ENCODE measurements at regions of chr6 and their contacts with region 1.

Region 1: GRCh38 chr6:33200219-33201146 is at the starts of genes RXRB and SLC39A7:
- DNase-seq: peak; percentile 97 to 100 (median 99)
- ATAC-seq: peak; percentile 75
- H3K4me3 ChIP-seq: peak within 1 kb of the TSS; percentile 77 to 85
- H3K4me3 Mint-ChIP-seq: peak within 1 kb of the TSS; percentile 98
- H3K27ac ChIP-seq: peak within 1 kb of the TSS; percentile 89 to 94
- H3K27ac Mint-ChIP-seq: peak within 1 kb of the TSS; percentile 99
- H3K4me1 ChIP-seq: peaks cover 57% of the 10 kb centered on the region
- H3K4me1 Mint-ChIP-seq: peaks cover 78% of the 10 kb centered on the region
- H3K27me3 ChIP-seq: no peaks in the 10 kb centered on the region
- H3K27me3 Mint-ChIP-seq: no peaks in the 10 kb centered on the region
- CTCF ChIP-seq: no peak
- total RNA-seq, gene RXRB: 39.2 to 40.0 TPM
- total RNA-seq, gene SLC39A7: 9.7 to 11.0 TPM

Region 2: GRCh38 chr6:32843979-32844838 is 356.3 kb before region 1 on chr6 and contains the start of gene PSMB8:
- CTCF ChIA-PET with region 1: no interaction called
- POLR2A ChIA-PET with region 1: no interaction called
- intact Hi-C with region 1: loop called in 1 of 2 experiments (anchors 1 kb)
- DNase-seq: peak; percentile 96 to 99 (median 99)
- ATAC-seq: peak; percentile 75
- H3K4me3 ChIP-seq: peak within 1 kb of the TSS; percentile 99
- H3K4me3 Mint-ChIP-seq: peak within 1 kb of the TSS; percentile 99
- H3K27ac ChIP-seq: peak within 1 kb of the TSS; percentile 96 to 100
- H3K27ac Mint-ChIP-seq: peak within 1 kb of the TSS; percentile 99
- H3K4me1 ChIP-seq: peaks cover 79% of the 10 kb centered on the region
- H3K4me1 Mint-ChIP-seq: peaks cover 83% of the 10 kb centered on the region
- H3K27me3 ChIP-seq: no peaks in the 10 kb centered on the region
- H3K27me3 Mint-ChIP-seq: no peaks in the 10 kb centered on the region
- CTCF ChIP-seq: no peak
- total RNA-seq, gene PSMB8: 108 to 117 TPM

Region 3: GRCh38 chr6:33161354-33162331 is 38.8 kb before region 1 on chr6:
- CTCF ChIA-PET with region 1: interaction called, 76 read pairs
- POLR2A ChIA-PET with region 1: interaction called, 3 read pairs
- intact Hi-C with region 1: loop called (anchors 1 kb)
- DNase-seq: peak; percentile 74 to 91 (median 85)
- ATAC-seq: peak; percentile 97
- H3K4me3 ChIP-seq: peak overlapping the region; percentile 50
- H3K4me3 Mint-ChIP-seq: peak overlapping the region; percentile 86
- H3K27ac ChIP-seq: no peak overlapping the region
- H3K27ac Mint-ChIP-seq: no peak overlapping the region
- H3K4me1 ChIP-seq: peaks cover 8% of the 10 kb centered on the region
- H3K4me1 Mint-ChIP-seq: peaks cover 14% of the 10 kb centered on the region
- H3K27me3 ChIP-seq: no peaks in the 10 kb centered on the region
- H3K27me3 Mint-ChIP-seq: peaks cover 4% of the 10 kb centered on the region
- CTCF ChIP-seq: peak; percentile 92

Region 4: DNA sequence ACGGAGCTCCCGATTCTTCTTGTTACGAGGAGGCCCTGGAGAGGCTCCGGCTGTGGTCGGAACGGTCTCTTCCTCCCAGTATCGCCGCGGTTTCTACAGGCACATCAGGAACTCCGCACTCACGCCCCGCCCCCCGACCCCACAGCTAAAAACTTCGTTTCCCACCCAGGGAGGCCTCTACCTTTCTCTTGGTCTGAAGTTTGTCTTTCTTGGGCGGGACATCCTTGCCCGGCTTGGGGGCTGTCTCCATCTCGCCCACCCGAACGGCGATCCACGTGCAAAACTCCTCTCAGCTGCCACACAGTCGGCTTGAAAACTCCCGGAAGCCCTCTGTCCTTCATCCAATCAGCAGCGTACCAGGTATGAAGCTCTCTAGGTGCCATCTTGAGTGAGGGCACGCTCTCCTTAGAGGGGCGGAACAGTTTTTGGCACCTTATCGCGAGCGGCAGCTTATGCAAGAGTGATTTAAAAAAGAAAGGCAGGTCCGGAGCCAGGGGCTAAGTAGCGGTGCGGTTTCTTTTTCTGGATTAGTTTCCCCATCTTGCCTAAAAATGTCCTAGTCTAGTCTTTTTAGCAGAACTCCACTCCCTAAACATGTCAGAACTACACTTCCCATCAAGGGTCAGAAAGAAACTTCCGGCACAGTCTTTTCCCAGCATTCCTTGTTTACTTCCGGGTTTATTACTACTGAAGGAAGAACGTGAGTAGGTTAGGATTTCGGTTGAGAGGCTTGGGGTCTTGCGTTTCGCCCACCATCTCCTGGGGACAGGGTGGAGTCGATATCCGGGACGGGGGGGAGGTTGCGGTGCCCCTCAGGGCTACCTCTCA is 88.7 kb after region 1 on chr6 and contains the starts of genes PFDN6 and WDR46:
- CTCF ChIA-PET with region 1: no interaction called
- POLR2A ChIA-PET with region 1: no interaction called
- intact Hi-C with region 1: loop called in 1 of 2 experiments (anchors 1 kb)
- DNase-seq: peak; percentile 64 to 94 (median 84)
- ATAC-seq: peak; percentile 96
- H3K4me3 ChIP-seq: peak within 1 kb of the TSS; percentile 81 to 98
- H3K4me3 Mint-ChIP-seq: peak within 1 kb of the TSS; percentile 99
- H3K27ac ChIP-seq: peak within 1 kb of the TSS; percentile 59 to 82
- H3K27ac Mint-ChIP-seq: peak within 1 kb of the TSS; percentile 88
- H3K4me1 ChIP-seq: peaks cover 25% of the 10 kb centered on the region
- H3K4me1 Mint-ChIP-seq: peaks cover 41% of the 10 kb centered on the region
- H3K27me3 ChIP-seq: no peaks in the 10 kb centered on the region
- H3K27me3 Mint-ChIP-seq: no peaks in the 10 kb centered on the region
- CTCF ChIP-seq: no peak
- total RNA-seq, gene PFDN6: 9.4 to 11.2 TPM
- total RNA-seq, gene WDR46: 19.9 to 22.1 TPM

Region 5: GRCh38 chr6:33317669-33318425 is 117.4 kb after region 1 on chr6 and contains the start of gene ZBTB22:
- CTCF ChIA-PET with region 1: interaction called, 4 read pairs
- POLR2A ChIA-PET with region 1: no interaction called
- intact Hi-C with region 1: loop called in 1 of 2 experiments (anchors 1 kb)
- DNase-seq: peak; percentile 91 to 98 (median 96)
- ATAC-seq: peak; percentile 61
- H3K4me3 ChIP-seq: peak within 1 kb of the TSS; percentile 72 to 78
- H3K4me3 Mint-ChIP-seq: peak within 1 kb of the TSS; percentile 99
- H3K27ac ChIP-seq: peak within 1 kb of the TSS; percentile 60 to 99
- H3K27ac Mint-ChIP-seq: peak within 1 kb of the TSS; percentile 97
- H3K4me1 ChIP-seq: peaks cover 65% of the 10 kb centered on the region
- H3K4me1 Mint-ChIP-seq: peaks cover 77% of the 10 kb centered on the region
- H3K27me3 ChIP-seq: no peaks in the 10 kb centered on the region
- H3K27me3 Mint-ChIP-seq: no peaks in the 10 kb centered on the region
- CTCF ChIP-seq: no peak
- total RNA-seq, gene ZBTB22: 8.8 to 9.3 TPM

Region 6: DNA sequence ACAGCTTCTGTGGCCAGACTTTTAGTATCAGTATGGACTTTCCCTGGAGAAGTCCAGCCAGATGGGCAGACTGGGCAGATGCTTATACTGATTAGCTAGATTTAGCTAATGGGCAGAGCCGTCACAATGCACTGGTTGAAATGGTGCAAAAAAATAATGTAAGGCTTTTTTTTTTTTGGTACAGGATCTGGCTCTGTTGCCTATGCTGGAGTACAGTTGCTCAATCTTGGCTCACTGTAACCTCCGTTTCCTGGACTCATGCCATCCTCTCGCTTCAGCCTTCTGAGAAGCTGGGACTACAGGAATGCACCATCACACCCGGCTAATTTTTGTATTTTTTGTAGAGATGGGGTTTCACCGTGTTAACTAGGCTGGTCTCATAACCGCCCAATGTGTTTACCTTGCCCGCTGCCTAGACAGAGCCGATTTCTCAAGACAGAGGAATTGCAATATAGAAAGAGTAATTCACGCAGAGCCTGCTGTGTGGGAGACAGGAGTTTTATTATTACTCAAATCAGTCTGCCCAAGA is 174.7 kb after region 1 on chr6:
- CTCF ChIA-PET with region 1: no interaction called
- POLR2A ChIA-PET with region 1: no interaction called
- intact Hi-C with region 1: no loop called
- DNase-seq: peak in 1 of 9 experiments; percentile 18
- ATAC-seq: no peak
- H3K4me3 ChIP-seq: no peak overlapping the region
- H3K4me3 Mint-ChIP-seq: no peak overlapping the region
- H3K27ac ChIP-seq: peak overlapping the region in 1 of 2 experiments; percentile 73
- H3K27ac Mint-ChIP-seq: peak overlapping the region; percentile 75
- H3K4me1 ChIP-seq: peaks cover 6% of the 10 kb centered on the region
- H3K4me1 Mint-ChIP-seq: peaks cover 20% of the 10 kb centered on the region
- H3K27me3 ChIP-seq: no peaks in the 10 kb centered on the region
- H3K27me3 Mint-ChIP-seq: no peaks in the 10 kb centered on the region
- CTCF ChIP-seq: no peak

Region 7: DNA sequence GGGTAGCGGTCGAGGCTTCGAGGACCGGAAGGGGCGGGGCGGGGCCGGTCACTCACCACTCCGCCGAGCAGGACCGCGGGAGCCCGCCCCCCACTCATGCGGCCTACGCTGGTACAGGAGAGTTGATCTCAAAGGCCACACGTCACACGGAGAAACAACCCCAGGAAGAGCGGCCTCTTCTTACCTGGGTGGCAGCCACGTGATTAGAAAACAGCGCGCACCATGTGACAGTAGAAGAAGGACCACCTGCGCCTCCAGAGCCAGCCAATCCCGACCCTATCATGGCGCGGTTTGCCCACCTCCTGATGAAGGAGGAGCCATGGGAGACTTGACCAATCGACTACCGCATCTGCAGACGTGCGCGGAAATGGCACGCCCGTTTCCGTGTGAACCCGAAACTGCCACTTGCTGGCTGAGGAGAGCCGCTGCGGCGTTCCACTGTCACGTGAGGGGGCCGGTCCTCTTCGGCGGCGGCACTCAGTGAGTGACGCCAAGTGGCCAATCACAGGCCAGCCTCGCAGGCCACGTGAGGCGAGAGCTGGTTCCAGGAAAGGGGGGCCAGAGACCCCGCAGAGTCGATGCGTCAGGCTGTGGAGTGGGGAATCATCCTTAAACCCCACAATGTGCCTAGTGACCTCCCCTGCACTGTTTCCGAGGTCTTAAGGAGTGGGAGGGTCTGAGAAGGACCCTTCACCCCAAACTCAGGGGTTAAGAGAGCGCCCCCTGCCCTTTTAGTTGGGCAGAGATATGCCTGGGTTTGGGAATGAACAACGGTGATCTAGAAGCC is 217.6 kb after region 1 on chr6 and contains the start of gene CUTA:
- CTCF ChIA-PET with region 1: no interaction called
- POLR2A ChIA-PET with region 1: no interaction called
- intact Hi-C with region 1: loop called (anchors 1 to 5 kb)
- DNase-seq: peak; percentile 96 to 100 (median 99)
- ATAC-seq: peak; percentile 87
- H3K4me3 ChIP-seq: peak within 1 kb of the TSS; percentile 68 to 70
- H3K4me3 Mint-ChIP-seq: peak within 1 kb of the TSS; percentile 94
- H3K27ac ChIP-seq: peak within 1 kb of the TSS; percentile 83 to 88
- H3K27ac Mint-ChIP-seq: peak within 1 kb of the TSS; percentile 97
- H3K4me1 ChIP-seq: peaks cover 68% of the 10 kb centered on the region
- H3K4me1 Mint-ChIP-seq: peaks cover 83% of the 10 kb centered on the region
- H3K27me3 ChIP-seq: no peaks in the 10 kb centered on the region
- H3K27me3 Mint-ChIP-seq: no peaks in the 10 kb centered on the region
- CTCF ChIP-seq: peak; percentile 27
- total RNA-seq, gene CUTA: 159 to 177 TPM

Region 8: GRCh38 chr6:34392497-34393190 is 1192.2 kb after region 1 on chr6 and contains the start of gene NUDT3:
- CTCF ChIA-PET with region 1: no interaction called
- POLR2A ChIA-PET with region 1: no interaction called
- intact Hi-C with region 1: loop called in 1 of 2 experiments (anchors 10 kb)
- DNase-seq: peak; percentile 90 to 98 (median 93)
- ATAC-seq: peak; percentile 90
- H3K4me3 ChIP-seq: peak within 1 kb of the TSS; percentile 78 to 96
- H3K4me3 Mint-ChIP-seq: peak within 1 kb of the TSS; percentile 72
- H3K27ac ChIP-seq: peak within 1 kb of the TSS; percentile 71 to 75
- H3K27ac Mint-ChIP-seq: peak within 1 kb of the TSS; percentile 94
- H3K4me1 ChIP-seq: peaks cover 15% of the 10 kb centered on the region
- H3K4me1 Mint-ChIP-seq: peaks cover 26% of the 10 kb centered on the region
- H3K27me3 ChIP-seq: no peaks in the 10 kb centered on the region
- H3K27me3 Mint-ChIP-seq: no peaks in the 10 kb centered on the region
- CTCF ChIP-seq: peak; percentile 77
- total RNA-seq, gene NUDT3: 12.5 to 12.9 TPM

Measured in CD8-positive, alpha-beta T cell (primary cell).